Sciatic nerve (tissue), 2 donors: ENCODE measurements at regions of chr4 and their contacts with region 1.

Region 1: GRCh38 chr4:55008166-55009070 is 117.0 kb downstream of the KDR start:
- DNase-seq: no peak
- ATAC-seq: peak; percentile 5

Region 2: GRCh38 chr4:53653484-53654053 is 1354.8 kb before region 1 on chr4:
- intact Hi-C with region 1: no loop called
- DNase-seq: no peak
- ATAC-seq: no peak

Region 3: DNA sequence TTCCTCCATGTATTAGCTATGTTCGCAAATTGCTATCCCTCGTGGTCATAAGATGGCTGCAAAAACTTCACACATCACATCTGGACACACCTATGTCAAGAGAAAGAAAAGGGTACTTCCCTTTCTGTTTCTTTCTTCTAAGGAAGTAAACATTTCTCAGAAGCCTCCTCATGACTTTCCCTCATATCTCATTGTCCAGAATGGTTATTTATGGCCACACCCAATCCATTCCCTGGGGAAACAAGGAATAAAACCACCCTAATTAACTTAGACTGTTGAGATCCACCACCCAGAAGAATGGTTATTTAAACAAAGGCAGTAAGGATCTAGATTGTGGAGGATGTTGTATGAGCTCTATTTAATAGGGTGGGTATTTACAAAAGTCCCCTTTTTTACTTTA is 1256.3 kb before region 1 on chr4:
- intact Hi-C with region 1: loop called (anchors 10 kb)
- DNase-seq: no peak
- ATAC-seq: no peak

Region 4: DNA sequence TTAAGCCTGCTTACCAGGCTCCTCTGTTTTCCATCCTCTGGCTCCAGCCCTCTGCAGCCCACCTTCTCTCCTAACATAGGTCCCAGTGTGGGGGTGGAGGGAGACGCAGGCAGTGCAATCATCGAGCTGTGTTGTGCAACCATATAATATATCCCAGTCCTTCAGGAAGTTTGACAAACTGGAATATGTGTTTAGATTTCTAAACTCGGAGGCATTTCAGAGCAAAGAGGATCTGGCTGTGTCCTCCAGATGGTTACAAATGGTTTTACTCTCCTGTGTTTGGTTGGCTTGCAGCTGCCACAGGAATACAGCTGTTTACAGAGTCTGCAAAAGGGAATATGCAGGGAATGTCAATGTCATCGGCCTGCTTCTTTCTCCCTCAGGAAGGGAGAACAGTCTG is 1221.8 kb before region 1 on chr4:
- intact Hi-C with region 1: no loop called
- DNase-seq: no peak
- ATAC-seq: no peak

Region 5: DNA sequence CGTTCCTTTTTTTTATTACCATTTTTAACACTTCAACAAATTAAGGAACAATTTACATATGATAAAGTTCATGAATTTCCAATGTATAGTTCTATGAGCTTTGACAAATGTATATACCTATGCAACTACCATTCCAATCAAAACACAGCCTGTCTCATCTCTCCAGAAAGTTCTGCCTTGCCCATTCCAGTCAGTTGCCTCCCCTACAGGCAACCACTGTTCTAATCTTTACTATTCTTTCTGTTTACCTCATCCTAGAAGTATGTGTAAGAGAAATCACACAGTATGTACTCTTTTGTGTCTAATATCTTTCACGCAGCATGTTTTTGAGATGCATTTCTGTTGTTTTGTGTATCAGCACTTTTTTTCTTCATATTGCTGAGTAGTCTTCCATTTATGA is 125.8 kb before region 1 on chr4:
- intact Hi-C with region 1: no loop called
- DNase-seq: no peak
- ATAC-seq: no peak

Region 6: GRCh38 chr4:54992266-54992665 is 16.2 kb before region 1 on chr4:
- intact Hi-C with region 1: no loop called
- DNase-seq: no peak
- ATAC-seq: no peak